ENCODE measurements at regions of chr4 and their contacts with region 1.

Region 1: GRCh38 chr4:127965062-127965802 is at the starts of genes ABHD18 and MFSD8:
- DNase-seq: peak; percentile 99
- total RNA-seq, gene ABHD18: 35.1 TPM
- total RNA-seq, gene MFSD8: 10.9 TPM

Region 2: GRCh38 chr4:127782274-127783025 is 182.8 kb before region 1 on chr4 and contains the start of gene HSPA4L:
- intact Hi-C with region 1: loop called (anchors 2 kb)
- DNase-seq: peak; percentile 77
- total RNA-seq, gene HSPA4L: 12.4 TPM

Region 3: DNA sequence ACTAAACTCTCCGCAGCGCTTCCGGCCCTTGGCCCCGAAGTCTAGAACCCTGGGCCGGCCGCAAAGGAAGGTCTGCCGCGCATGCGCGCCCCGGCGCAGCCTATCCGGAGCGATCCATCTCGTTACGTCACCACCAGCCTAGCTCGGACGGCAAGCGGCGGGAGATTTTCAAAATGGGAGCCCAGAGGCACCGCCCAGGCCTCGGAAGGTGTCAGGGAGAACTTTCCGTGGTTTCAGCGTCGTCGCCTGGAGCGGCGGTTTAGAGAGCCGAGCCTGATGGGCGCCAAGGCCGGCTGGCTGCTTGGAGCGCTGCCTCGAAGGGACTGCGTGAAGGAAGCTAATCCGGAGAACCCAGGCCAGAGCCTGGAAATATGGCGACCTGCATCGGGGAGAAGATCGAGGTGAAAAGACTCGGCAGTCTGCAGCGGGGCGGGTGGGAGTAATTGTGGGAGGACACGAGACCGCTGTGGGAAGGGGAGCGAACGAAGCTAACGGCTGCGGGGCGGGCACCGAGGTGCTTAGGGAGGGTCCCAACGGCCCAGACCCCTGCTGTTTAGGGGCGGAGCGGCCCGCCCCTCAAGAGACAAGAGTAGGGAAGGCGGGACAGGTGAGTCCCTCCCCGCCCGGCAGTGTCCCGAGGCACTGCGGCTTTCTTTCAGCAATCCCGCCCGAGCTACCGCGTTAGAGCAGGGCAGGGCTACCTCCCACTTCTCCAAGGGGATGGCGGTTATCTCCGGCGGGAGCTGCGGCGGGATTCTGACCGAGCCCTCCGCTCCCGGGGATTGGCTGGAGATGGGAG is 84.3 kb before region 1 on chr4 and contains the start of gene PLK4:
- intact Hi-C with region 1: loop called (anchors 1 kb)
- DNase-seq: peak; percentile 98
- total RNA-seq, gene PLK4: 0.75 TPM

Region 4: DNA sequence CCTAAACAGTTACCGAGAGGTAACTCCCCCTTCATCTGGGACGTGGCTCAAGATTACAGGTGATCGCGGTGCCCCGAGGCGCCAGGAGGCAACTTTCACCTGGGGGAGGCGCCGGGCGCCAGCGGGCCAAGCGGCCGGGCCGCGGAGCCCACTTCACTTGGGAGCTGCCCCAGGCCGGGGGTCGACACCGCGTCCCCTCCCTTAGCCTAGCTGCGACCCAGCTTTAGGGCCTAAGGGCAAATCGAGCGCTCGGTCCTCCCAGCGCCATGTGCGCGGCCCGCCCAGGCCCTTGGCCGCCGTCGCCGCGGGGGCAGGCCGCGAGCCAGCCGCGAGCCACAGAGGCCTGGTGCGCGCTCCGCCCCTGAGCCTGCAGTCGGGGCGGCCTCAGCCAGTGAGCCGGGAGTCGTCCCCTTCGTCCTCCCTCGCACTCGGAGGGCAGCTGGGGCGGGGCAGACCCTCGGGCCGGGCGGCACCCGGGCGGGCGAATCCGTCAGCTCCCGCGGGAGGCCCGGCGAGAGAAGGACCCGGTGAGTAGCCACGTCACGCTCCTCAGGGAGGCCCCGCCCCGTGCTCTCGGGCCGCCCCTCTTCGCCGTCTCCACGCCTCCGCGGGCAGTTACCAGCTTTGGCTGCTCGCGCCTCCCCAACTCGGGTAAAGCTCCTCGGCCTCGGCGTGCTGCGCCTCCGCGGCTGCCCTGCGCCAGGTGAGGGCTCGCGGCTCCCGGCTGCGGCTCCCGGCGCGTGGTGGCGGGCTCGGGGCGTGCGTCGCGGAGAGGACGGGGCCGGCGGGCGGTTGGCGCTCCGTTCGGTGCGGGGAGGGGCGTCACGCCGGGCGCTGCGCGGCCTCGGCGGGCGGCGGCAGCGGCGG is 95.7 kb after region 1 on chr4 and contains the start of gene LARP1B:
- intact Hi-C with region 1: loop called (anchors 1 kb)
- DNase-seq: peak; percentile 99
- total RNA-seq, gene LARP1B: 24.2 TPM

Region 5: GRCh38 chr4:128227991-128228571 is 262.8 kb after region 1 on chr4:
- intact Hi-C with region 1: no loop called
- DNase-seq: no peak